ENCODE measurements at regions of chr16 and their contacts with region 1.

Region 1: DNA sequence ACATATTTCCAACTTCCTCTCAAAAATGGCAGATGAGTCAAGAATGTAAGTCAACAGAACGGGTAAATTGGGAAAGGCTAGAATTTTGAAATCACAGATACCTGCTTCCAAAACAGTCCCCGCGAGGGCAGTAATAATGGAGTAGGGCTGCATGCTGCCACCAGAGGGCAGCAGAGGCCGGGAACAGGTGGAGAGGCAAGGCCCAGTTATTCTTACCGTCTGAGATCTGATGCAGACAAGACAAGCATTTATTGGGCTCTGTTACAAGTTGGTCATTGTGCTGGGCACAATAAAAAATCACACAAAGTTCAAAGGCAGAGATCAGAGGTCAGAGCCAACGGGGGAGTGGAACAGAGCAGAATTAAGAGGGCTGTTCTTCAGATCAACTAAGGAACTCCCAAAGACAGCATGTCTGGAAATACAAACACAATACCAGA is 8.8 kb upstream of the MLKL start:
- DNase-seq: peak; percentile 85
- ATAC-seq: peak; percentile 95
- H3K4me3 ChIP-seq: no peak overlapping the region
- H3K4me3 Mint-ChIP-seq: no peak overlapping the region
- H3K27ac ChIP-seq: no peak overlapping the region
- H3K27ac Mint-ChIP-seq: no peak overlapping the region
- H3K4me1 ChIP-seq: no peaks in the 10 kb centered on the region
- H3K4me1 Mint-ChIP-seq: peaks cover 1% of the 10 kb centered on the region
- H3K27me3 ChIP-seq: no peaks in the 10 kb centered on the region
- H3K27me3 Mint-ChIP-seq: no peaks in the 10 kb centered on the region
- CTCF ChIP-seq: peak; percentile 98

Region 2: GRCh38 chr16:74684131-74684530 is 25.3 kb before region 1 on chr16:
- CTCF ChIA-PET with region 1: no interaction called
- POLR2A ChIA-PET with region 1: no interaction called
- intact Hi-C with region 1: loop called (anchors 1 kb)
- DNase-seq: no peak
- ATAC-seq: no peak
- H3K4me3 ChIP-seq: no peak overlapping the region
- H3K4me3 Mint-ChIP-seq: no peak overlapping the region
- H3K27ac ChIP-seq: no peak overlapping the region
- H3K27ac Mint-ChIP-seq: no peak overlapping the region
- H3K4me1 ChIP-seq: peaks cover 3 to 12% of the 10 kb centered on the region in 2 donors
- H3K4me1 Mint-ChIP-seq: peaks cover 7% of the 10 kb centered on the region
- H3K27me3 ChIP-seq: no peaks in the 10 kb centered on the region
- H3K27me3 Mint-ChIP-seq: no peaks in the 10 kb centered on the region
- CTCF ChIP-seq: no peak

Region 3: GRCh38 chr16:74695450-74696422 is 13.7 kb before region 1 on chr16:
- CTCF ChIA-PET with region 1: interaction called, 16 read pairs
- POLR2A ChIA-PET with region 1: interaction called, 3 read pairs
- intact Hi-C with region 1: no loop called
- DNase-seq: peak; percentile 81
- ATAC-seq: peak; percentile 85
- H3K4me3 ChIP-seq: peak overlapping the region in 4 of 5 experiments; percentile 26 to 60 (median 42)
- H3K4me3 Mint-ChIP-seq: peak overlapping the region; percentile 89
- H3K27ac ChIP-seq: peak overlapping the region; percentile 34 to 44
- H3K27ac Mint-ChIP-seq: peak overlapping the region; percentile 72
- H3K4me1 ChIP-seq: peaks cover 23 to 29% of the 10 kb centered on the region in 2 donors
- H3K4me1 Mint-ChIP-seq: peaks cover 37% of the 10 kb centered on the region
- H3K27me3 ChIP-seq: no peaks in the 10 kb centered on the region
- H3K27me3 Mint-ChIP-seq: no peaks in the 10 kb centered on the region
- CTCF ChIP-seq: no peak

Region 4: DNA sequence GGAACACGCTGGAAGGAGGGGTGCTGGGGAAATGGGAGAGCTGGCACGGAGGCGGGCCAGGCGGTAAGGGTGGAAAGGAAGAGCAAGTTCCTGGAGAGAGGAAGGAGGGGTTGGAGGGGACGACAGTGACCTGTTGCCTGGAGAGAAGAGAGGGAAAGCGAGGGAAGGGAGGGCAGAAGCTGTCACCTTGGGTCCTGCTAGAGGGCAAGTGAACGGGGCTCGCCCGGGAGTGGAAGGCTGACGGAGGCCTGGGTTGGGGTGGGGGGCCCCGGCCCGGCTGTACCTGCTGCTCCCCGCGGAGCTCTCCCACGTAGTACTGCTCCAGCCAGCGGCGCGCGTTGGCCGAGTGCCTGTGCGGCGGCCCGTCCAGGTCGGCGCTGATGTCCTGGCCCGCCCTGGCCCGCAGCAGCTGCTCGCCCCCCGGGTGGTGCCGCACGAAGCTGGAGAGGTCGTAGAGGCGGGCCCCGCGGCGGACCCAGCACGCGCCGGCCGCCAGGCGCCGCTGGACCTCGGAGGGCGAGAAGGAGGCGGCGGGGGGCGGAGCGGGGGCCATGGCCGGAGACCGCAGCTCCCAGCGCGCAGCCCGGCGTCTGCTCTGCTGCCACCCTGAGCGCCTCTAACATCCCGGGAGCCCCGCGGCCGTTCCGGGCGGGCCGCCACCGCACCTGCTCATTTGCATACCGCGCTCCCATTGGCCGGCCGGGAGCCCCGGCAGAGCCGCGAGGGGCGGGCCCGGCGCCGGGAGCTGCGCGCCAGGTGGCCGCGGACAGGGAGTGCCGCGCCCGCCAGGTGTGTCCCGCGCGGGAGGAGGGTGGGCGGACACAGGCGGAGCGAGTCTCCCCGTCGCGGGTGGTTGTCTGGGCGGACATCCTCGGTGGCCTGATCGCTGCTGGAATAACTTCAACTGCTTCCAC is 65.0 kb after region 1 on chr16 and contains the start of gene FA2H:
- CTCF ChIA-PET with region 1: no interaction called
- POLR2A ChIA-PET with region 1: no interaction called
- intact Hi-C with region 1: loop called (anchors 5 kb)
- DNase-seq: peak; percentile 80
- ATAC-seq: peak; percentile 88
- H3K4me3 ChIP-seq: peak within 1 kb of the TSS in 4 of 5 experiments; percentile 19 to 54 (median 44)
- H3K4me3 Mint-ChIP-seq: peak within 1 kb of the TSS; percentile 84
- H3K27ac ChIP-seq: no peak within 1 kb of the TSS
- H3K27ac Mint-ChIP-seq: no peak within 1 kb of the TSS
- H3K4me1 ChIP-seq: peaks cover 31 to 34% of the 10 kb centered on the region in 2 donors
- H3K4me1 Mint-ChIP-seq: peaks cover 37% of the 10 kb centered on the region
- H3K27me3 ChIP-seq: peaks cover 0 to 6% (median 3%) of the 10 kb centered on the region in 4 experiments
- H3K27me3 Mint-ChIP-seq: peaks cover 15% of the 10 kb centered on the region
- CTCF ChIP-seq: peak; percentile 23
- total RNA-seq, gene FA2H: 1.0 TPM in 2 replicates

Region 5: GRCh38 chr16:74862741-74863244 is 153.3 kb after region 1 on chr16:
- CTCF ChIA-PET with region 1: interaction called, 108 read pairs
- POLR2A ChIA-PET with region 1: no interaction called
- intact Hi-C with region 1: no loop called
- DNase-seq: peak; percentile 63
- ATAC-seq: no peak
- H3K4me3 ChIP-seq: no peak overlapping the region
- H3K4me3 Mint-ChIP-seq: no peak overlapping the region
- H3K27ac ChIP-seq: no peak overlapping the region
- H3K27ac Mint-ChIP-seq: peak overlapping the region; percentile 26
- H3K4me1 ChIP-seq: no peaks in the 10 kb centered on the region
- H3K4me1 Mint-ChIP-seq: peaks cover 3% of the 10 kb centered on the region
- H3K27me3 ChIP-seq: no peaks in the 10 kb centered on the region
- H3K27me3 Mint-ChIP-seq: no peaks in the 10 kb centered on the region
- CTCF ChIP-seq: peak; percentile 80

Region 6: DNA sequence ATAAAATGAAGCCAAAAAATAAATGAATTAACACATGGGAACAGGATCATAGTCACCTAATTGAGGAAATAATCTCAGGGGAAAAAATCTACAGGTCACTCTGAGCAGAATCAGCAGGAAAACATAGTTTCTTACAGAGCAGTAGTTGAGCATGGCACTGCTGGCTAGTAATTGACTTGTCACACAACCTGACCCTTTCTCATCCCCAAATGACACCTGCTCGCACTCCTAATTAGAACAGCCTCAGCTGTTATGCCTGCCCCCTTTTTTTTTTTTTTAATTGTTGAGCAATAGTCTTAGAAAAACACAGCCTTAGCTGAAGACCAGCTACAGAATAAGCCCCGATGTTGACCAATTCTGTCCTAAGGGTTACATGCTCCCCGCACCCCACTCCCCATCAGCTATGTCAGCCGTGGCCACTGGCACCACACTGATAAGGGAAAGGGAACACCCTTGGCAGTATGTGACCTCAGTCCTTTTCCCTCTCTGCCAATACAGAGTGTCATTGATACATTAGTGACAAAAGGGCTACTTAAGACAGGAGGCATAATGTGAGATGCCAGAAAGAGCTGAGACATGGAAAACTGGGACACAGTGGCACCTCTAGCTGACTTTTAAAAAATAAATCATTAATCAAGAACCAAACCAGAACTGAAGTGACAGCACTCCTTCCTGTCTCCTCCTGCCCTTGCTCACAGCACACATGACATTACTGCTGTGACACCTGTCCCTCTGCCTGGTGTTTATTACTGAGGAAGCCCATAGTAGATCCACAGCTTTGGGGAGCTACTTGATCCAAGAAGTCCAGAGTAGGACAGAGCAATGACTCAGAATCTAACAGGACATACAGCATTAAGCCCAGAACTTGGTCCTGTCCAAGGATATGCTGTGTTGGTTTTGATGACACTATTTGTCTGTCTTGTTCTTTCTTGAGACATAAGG is 233.8 kb after region 1 on chr16:
- CTCF ChIA-PET with region 1: no interaction called
- POLR2A ChIA-PET with region 1: no interaction called
- intact Hi-C with region 1: no loop called
- DNase-seq: no peak
- ATAC-seq: no peak
- H3K4me3 ChIP-seq: no peak overlapping the region
- H3K4me3 Mint-ChIP-seq: no peak overlapping the region
- H3K27ac ChIP-seq: no peak overlapping the region
- H3K27ac Mint-ChIP-seq: no peak overlapping the region
- H3K4me1 ChIP-seq: no peaks in the 10 kb centered on the region
- H3K4me1 Mint-ChIP-seq: no peaks in the 10 kb centered on the region
- H3K27me3 ChIP-seq: no peaks in the 10 kb centered on the region
- H3K27me3 Mint-ChIP-seq: no peaks in the 10 kb centered on the region
- CTCF ChIP-seq: no peak

Region 7: GRCh38 chr16:75385507-75386152 is 676.2 kb after region 1 on chr16:
- CTCF ChIA-PET with region 1: no interaction called
- POLR2A ChIA-PET with region 1: no interaction called
- intact Hi-C with region 1: loop called (anchors 10 kb)
- DNase-seq: peak; percentile 74
- ATAC-seq: peak; percentile 39
- H3K4me3 ChIP-seq: no peak overlapping the region
- H3K4me3 Mint-ChIP-seq: no peak overlapping the region
- H3K27ac ChIP-seq: no peak overlapping the region
- H3K27ac Mint-ChIP-seq: no peak overlapping the region
- H3K4me1 ChIP-seq: peaks cover 10 to 17% of the 10 kb centered on the region in 2 donors
- H3K4me1 Mint-ChIP-seq: peaks cover 8% of the 10 kb centered on the region
- H3K27me3 ChIP-seq: peaks cover 4 to 40% (median 35%) of the 10 kb centered on the region in 4 experiments
- H3K27me3 Mint-ChIP-seq: peaks cover 37% of the 10 kb centered on the region
- CTCF ChIP-seq: peak; percentile 83

Measured in B cell (primary cell).